ENCODE measurements at regions of chr9 and their contacts with region 1.

Region 1: GRCh38 chr9:127229691-127230423 is 34.7 kb upstream of the GARNL3 start:
- DNase-seq: no peak
- ATAC-seq: no peak
- H3K4me3 ChIP-seq: no peak overlapping the region
- H3K27ac ChIP-seq: no peak overlapping the region
- H3K4me1 ChIP-seq: peaks cover 8% of the 10 kb centered on the region; the same call in 2 of the 3 replicates
- CTCF ChIP-seq: no peak
- EP300 ChIP-seq: no peak
- POLR2A ChIP-seq: no peak
- RAD21 ChIP-seq: no peak

Region 2: DNA sequence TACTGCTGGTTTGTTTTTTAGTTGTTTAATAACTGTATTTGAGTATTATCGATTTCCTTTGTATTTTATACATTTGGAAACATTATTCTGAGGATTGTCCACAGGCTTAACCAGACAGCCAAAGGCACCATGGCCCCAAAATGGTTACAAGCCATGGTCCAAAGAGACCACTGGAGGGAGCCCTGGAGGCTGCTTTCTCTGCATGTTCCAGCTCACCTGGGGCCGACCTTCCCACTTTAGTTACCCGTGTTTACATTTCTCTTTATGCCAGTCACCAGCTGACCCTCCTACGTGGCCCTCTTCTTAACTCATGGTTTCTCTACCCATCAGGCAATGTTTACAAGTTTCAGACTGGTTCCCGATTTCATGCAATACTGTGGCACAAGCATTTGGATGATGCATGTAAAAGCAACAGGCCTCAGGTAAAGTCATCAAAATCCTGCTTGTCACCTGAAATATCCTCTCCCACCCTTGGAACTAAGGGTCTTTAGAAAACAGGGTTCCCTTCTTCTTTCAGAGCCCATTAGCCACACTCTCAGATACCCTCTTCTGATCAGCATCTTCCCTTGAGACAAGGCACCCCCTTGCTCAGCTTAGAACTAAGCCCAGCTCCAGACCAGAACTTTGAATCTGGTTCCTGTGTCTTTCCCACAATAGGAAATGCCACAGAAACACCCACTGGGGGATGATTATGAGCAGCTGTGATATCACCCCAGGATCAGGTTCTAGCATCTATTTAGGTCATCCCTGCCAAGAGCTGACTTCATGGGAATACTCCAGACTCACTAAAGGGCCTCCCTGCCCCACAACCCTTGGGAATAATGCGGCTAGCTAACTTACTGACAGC is 15.2 kb before region 1 on chr9:
- CTCF ChIA-PET with region 1: interaction called, 22 read pairs
- POLR2A ChIA-PET with region 1: no interaction called
- DNase-seq: peak; percentile 58 to 87
- ATAC-seq: peak; percentile 81 to 87
- H3K4me3 ChIP-seq: no peak overlapping the region
- H3K27ac ChIP-seq: no peak overlapping the region
- H3K4me1 ChIP-seq: no peaks in the 10 kb centered on the region
- CTCF ChIP-seq: peak; percentile 79
- EP300 ChIP-seq: no peak
- POLR2A ChIP-seq: no peak
- RAD21 ChIP-seq: peak; percentile 77 to 80

Region 3: DNA sequence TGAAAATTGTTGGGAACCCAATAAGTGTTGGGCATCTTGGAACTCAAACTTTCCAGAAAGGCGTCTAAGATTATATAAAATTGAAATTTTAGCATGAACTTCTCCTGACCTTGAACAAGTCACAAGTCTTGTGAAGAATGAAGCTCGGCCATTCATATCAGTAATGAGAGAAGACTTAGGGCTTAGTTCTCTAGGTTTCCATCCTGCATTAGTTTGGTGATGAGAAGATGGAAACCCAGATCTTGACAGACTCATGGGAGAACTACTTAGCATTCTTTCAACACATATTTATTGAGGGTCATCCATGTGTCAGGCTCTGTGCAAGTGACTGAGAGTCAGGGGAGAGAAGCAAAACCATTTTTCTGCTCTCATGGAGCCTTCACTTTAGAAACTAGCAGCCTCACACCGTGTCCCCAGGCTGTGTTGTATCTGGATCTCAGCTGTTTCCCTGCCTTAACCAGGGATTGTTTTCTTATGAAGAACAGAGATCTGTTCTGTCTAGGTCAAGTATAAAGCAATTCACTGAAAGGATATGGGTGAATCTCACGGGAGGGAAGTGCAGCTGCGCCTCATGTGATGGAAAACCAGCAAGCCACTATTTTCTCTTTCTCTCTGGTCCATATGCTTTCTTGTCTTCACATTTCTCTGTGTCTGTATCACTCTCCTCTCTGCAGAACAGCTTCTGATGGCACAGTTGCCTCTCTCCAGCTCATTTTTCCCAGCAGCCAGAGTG is 38.1 kb after region 1 on chr9:
- CTCF ChIA-PET with region 1: no interaction called
- POLR2A ChIA-PET with region 1: no interaction called
- DNase-seq: no peak
- ATAC-seq: no peak
- H3K4me3 ChIP-seq: no peak overlapping the region
- H3K27ac ChIP-seq: no peak overlapping the region
- H3K4me1 ChIP-seq: no peaks in the 10 kb centered on the region
- CTCF ChIP-seq: no peak
- EP300 ChIP-seq: no peak
- POLR2A ChIP-seq: no peak
- RAD21 ChIP-seq: no peak

Region 4: DNA sequence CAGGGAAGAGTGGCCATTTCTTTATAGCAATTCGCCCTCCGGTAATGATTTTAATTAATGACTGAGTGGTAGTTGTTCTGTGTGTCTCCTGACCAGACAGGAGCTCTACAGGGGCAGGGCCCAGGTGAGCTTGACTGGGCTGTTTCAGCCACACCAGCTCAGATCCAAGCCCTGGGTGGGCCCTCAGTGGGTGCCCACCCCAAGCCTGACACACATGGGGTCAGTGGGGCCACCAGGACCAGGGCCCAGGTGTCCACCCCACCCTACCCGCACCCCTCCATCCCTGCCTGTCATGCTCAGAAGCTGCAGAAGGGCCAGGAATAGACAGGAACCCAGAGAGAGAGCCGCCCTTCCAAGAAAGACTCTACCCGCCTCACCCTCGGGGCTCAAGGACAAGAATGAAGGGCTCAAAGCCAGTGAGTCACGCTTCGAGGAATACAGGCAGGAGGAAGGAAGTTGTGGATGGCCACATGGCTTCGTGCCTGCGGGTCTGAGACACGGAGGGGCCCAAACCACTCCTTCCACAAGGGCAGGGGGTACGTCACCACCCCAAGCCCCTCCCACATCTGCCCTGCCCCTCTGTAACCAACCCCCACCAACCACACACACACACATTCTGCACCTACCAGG is 326.0 kb after region 1 on chr9:
- CTCF ChIA-PET with region 1: no interaction called
- POLR2A ChIA-PET with region 1: no interaction called
- DNase-seq: peak; percentile 90 to 96
- ATAC-seq: peak; percentile 83 to 86
- H3K4me3 ChIP-seq: no peak overlapping the region
- H3K27ac ChIP-seq: peak overlapping the region; percentile 82 to 92
- H3K4me1 ChIP-seq: peaks cover 87% of the 10 kb centered on the region
- CTCF ChIP-seq: no peak
- EP300 ChIP-seq: no peak
- POLR2A ChIP-seq: no peak
- RAD21 ChIP-seq: 0 out of 5 replicates have a peak, but pooled peaks of 1 of the 2 experiments have one; percentile 9

Measured in A549 (cell line).